Posterior vena cava (tissue), 2 donors: ENCODE measurements at regions of chr3 and their contacts with region 1.

Region 1: DNA sequence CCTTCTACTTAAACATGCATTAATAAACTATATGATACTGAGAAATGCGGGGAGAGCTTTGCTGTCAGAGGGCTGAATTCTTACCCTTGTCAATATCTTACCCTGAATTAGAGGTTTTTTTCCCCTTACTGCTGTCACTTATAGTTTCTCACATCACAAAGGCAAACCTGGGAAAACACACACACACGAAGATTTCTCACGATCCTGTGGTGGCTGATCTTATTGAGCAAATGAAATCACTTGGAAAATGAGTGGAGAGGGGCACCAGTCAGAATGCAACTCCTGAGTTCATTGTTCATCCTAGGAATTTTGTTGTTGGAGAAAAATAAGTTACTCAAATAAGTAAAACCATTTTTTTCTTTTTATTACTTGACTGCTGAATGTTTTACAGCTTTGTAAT is 673.6 kb downstream of the EDEM1 start:
- DNase-seq: no peak

Region 2: GRCh38 chr3:5197470-5198312 is 663.5 kb before region 1 on chr3:
- intact Hi-C with region 1: no loop called
- DNase-seq: no peak

Region 3: GRCh38 chr3:5360453-5360852 is 500.7 kb before region 1 on chr3:
- intact Hi-C with region 1: loop called in 1 of 2 experiments (anchors 5 kb)
- DNase-seq: no peak

Region 4: GRCh38 chr3:6108958-6109357 is 247.8 kb after region 1 on chr3:
- intact Hi-C with region 1: no loop called
- DNase-seq: no peak

Region 5: GRCh38 chr3:6733699-6734394 is 872.7 kb after region 1 on chr3:
- intact Hi-C with region 1: loop called in 1 of 2 experiments (anchors 5 kb)
- DNase-seq: no peak